PC-9 (cell line): ENCODE measurements at regions of chr6 and their contacts with region 1.

Region 1: GRCh38 chr6:141780296-141780695 is 352.4 kb upstream of the GJE1 start:
- DNase-seq: no peak
- H3K4me3 ChIP-seq: no peak overlapping the region
- H3K27ac ChIP-seq: no peak overlapping the region
- H3K4me1 ChIP-seq: no peaks in the 10 kb centered on the region
- H3K27me3 ChIP-seq: no peaks in the 10 kb centered on the region
- CTCF ChIP-seq: no peak

Region 2: GRCh38 chr6:141541581-141542324 is 238.5 kb before region 1 on chr6:
- CTCF ChIA-PET with region 1: no interaction called
- POLR2A ChIA-PET with region 1: no interaction called
- intact Hi-C with region 1: no loop called
- DNase-seq: no peak
- H3K4me3 ChIP-seq: no peak overlapping the region
- H3K27ac ChIP-seq: no peak overlapping the region
- H3K4me1 ChIP-seq: peaks cover 13% of the 10 kb centered on the region; the same call in 1 of the 2 replicates
- H3K27me3 ChIP-seq: no peaks in the 10 kb centered on the region
- CTCF ChIP-seq: no peak

Region 3: DNA sequence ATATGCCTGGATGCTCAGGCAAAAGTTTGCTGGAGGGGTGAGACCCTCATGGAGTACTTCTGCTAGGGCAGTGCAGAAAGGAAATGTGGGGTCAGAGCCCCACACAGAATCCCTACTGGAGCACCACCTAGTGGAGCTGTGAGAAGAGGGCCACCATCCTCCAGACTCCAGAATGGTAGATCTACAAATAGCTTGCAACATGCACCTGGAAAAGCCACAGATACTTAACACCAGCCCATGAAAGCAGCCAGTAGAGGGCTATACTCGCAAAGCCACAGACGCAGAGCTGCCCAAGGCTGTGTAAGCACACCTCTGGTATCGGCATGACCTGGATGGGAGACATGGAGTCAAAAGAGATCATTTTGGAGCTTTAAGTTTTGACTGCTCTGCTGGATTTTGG is 291.7 kb after region 1 on chr6:
- CTCF ChIA-PET with region 1: no interaction called
- POLR2A ChIA-PET with region 1: no interaction called
- intact Hi-C with region 1: no loop called
- DNase-seq: no peak
- H3K4me3 ChIP-seq: no peak overlapping the region
- H3K27ac ChIP-seq: no peak overlapping the region
- H3K4me1 ChIP-seq: no peaks in the 10 kb centered on the region
- H3K27me3 ChIP-seq: no peaks in the 10 kb centered on the region
- CTCF ChIP-seq: no peak

Region 4: DNA sequence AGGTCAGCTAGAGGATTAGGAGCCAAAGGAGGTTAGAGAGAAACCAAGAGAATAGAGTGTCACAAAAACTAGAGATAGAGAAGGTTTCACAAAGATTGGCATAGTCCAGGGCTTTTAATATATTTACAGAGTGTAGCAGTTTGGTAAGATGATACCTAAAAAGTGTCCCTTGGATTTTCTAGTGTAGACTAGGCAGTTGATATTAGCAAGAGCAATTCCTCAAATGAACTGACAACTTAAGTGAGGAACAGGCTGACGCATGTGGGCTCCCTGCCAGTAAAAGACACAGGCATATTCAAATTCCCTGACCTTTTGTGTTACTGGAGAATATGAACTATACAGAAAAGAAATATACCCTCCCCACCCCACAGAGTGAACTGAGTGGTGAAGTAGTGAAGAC is 406.9 kb after region 1 on chr6:
- CTCF ChIA-PET with region 1: no interaction called
- POLR2A ChIA-PET with region 1: interaction called, 13 read pairs
- intact Hi-C with region 1: no loop called
- DNase-seq: no peak
- H3K4me3 ChIP-seq: no peak overlapping the region
- H3K27ac ChIP-seq: no peak overlapping the region
- H3K4me1 ChIP-seq: no peaks in the 10 kb centered on the region
- H3K27me3 ChIP-seq: no peaks in the 10 kb centered on the region
- CTCF ChIP-seq: no peak